ENCODE measurements at regions of chr5 and their contacts with region 1.

Region 1: DNA sequence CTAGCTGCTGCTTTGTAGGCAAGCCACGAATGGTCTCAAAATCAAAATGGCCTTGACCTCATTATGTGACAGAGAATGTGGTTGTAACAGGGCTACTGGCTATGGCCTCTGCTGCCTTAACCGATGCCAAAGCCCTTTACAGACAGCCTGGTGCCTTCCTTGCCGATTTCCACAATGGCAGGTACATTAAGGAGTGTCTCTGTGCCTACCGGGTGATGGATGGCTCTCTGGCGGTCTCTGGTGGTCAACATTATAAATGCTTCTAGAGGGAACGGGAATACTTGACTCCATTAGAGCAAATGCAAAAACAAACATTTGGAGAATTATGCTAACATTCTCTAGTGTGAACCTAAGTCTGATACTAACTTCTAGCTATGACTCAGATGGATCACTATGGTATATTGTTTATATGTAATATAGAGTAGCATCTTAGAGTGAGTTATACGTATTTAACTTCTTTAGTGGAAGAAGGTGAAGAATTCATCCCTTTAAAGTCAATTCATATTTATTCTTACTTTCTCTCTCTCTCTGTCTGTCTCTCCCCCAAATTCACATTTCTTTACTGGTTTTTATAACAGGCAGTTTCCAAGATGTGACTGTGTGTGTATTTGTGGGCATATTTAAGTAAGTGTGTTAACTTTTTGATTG is 52.5 kb downstream of the RPS23 start:
- DNase-seq: no peak
- ATAC-seq: peak; percentile 81

Region 2: DNA sequence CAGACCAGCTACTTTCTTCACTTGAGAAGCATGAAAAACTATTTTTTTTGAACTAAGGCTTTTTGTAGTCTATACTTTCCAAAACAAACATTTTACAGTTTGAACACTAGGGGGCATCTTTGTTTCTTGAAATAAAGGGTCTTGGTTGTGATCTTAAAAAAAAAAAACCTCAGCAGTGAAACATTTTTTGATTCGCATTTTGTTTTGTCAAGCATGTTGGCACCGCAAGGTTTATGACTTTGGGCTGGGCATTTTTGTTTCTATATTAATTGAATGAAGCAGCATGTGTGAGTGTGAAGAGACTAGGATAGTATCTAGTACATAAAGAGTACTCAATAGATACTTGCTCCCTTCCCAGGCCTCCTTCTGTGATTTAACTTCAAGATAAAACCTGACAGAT is 800.1 kb before region 1 on chr5:
- intact Hi-C with region 1: loop called (anchors 5 kb)
- DNase-seq: no peak
- ATAC-seq: no peak